HEK293 (cell line): ENCODE measurements at regions of chr20 and their contacts with region 1.

Region 1: DNA sequence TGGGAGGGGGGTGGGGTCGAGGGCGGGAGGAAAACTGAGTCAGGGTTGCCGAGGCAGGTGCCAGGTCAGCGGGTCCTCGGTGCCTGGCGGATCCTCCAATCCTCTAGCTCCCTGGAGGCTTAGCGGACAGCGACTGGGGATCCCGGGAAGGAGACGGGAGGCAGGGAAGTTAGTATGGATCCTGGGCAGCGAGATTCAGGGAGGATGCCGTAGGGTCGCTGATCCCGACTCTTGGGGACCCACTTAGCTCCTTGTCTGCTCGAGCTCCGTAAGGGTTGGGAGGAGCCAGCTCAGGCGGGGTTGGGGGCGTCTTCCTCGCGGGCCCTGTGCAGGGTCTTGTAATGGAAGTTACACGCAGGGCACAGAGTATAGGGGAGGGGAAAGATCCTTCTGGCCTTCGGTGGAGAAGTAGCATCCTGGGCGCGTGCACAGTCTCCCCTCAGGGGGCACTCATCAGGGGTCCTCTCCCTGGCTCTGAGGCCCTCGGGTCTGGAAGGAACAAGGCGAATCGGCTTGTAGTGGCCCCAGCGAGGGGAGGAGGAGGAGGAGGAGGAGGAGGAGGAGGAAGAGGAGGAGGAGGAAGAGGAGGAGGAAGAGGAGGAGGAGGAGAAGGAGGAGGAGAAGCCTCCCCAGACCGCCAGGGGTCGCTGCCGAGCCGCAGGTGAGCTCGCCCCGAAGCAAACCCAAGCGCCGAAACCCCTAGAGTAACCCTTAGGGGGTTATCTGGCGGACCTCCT is 6.4 kb upstream of the SLC12A5 start:
- H3K4me3 ChIP-seq: peak overlapping the region; percentile 68
- H3K27ac ChIP-seq: no peak overlapping the region
- H3K4me1 ChIP-seq: no peaks in the 10 kb centered on the region
- CTCF ChIP-seq: peak; percentile 51

Region 2: GRCh38 chr20:45850926-45851325 is 171.7 kb before region 1 on chr20:
- CTCF ChIA-PET with region 1: no interaction called
- POLR2A ChIA-PET with region 1: no interaction called
- H3K4me3 ChIP-seq: no peak overlapping the region
- H3K27ac ChIP-seq: no peak overlapping the region
- H3K4me1 ChIP-seq: no peaks in the 10 kb centered on the region
- CTCF ChIP-seq: no peak

Region 3: GRCh38 chr20:46089417-46090388 is 67.1 kb after region 1 on chr20 and contains the start of gene NCOA5:
- CTCF ChIA-PET with region 1: interaction called, 11 read pairs
- POLR2A ChIA-PET with region 1: no interaction called
- H3K4me3 ChIP-seq: peak within 1 kb of the TSS; percentile 95
- H3K27ac ChIP-seq: peak within 1 kb of the TSS; percentile 87
- H3K4me1 ChIP-seq: peaks cover 22% of the 10 kb centered on the region
- CTCF ChIP-seq: peak; percentile 72; the same call in 1 of the 2 replicates